ACHN (cell line): ENCODE measurements at regions of chr3 and their contacts with region 1.

Region 1: DNA sequence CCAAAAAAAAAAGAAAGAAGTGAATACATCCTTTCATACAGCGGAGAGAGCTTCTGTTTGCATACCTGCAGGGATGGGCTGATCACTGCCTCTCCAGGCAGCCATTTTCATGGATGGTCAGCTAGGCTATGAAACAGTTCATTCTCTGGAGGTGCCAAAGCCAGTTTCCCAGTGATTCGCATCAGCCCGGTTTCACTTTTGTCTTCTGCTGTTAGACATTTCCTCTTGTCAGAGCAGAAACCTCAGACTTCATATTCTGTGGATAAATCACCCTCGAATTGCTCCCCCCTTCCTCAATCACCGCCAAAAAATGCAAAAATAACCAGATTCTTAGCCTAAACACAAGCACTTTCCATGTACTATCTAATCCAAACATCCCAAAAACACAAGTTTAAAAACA is 225.6 kb downstream of the ADAMTS9 start:
- DNase-seq: peak; percentile 30

Region 2: GRCh38 chr3:64030741-64031140 is 431.5 kb before region 1 on chr3:
- in situ Hi-C with region 1: loop called (anchors 25 kb)
- DNase-seq: peak; percentile 71

Region 3: DNA sequence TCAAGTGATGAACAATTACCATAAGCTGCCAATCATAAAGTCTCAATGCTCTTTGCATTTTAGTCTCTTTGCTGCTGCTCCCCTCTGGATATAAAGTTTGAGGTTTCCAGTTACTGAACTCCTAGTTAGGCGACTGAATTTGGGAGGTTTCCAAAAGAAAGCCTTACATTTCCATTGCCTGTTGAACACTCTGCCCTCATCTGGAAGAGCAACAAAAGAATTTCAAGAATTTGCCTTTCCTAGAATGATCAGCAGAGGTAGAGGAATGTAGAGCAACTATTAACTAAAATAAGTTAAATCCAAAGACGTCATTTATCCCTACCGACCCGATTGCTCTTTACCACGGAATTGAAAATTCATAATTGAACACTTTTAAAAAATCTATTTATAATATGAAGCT is 183.6 kb before region 1 on chr3:
- in situ Hi-C with region 1: no loop called
- DNase-seq: peak; percentile 88

Region 4: GRCh38 chr3:64824394-64824909 is 362.2 kb after region 1 on chr3:
- in situ Hi-C with region 1: no loop called
- DNase-seq: no peak